Activated naive CD4-positive, alpha-beta T cell treated with anti-CD3 and anti-CD28 coated beads for 36 hours (primary cell): ENCODE measurements at regions of chr11 and their contacts with region 1.

Region 1: GRCh38 chr11:32090545-32091373 is at the start of gene RCN1:
- DNase-seq: peak; percentile 43
- H3K4me3 Mint-ChIP-seq: peak within 1 kb of the TSS; percentile 79
- H3K27ac Mint-ChIP-seq: peak within 1 kb of the TSS; percentile 86
- H3K4me1 Mint-ChIP-seq: peaks cover 39% of the 10 kb centered on the region
- H3K27me3 Mint-ChIP-seq: peaks cover 4% of the 10 kb centered on the region
- total RNA-seq, gene RCN1: 24.8 to 29.6 TPM

Region 2: DNA sequence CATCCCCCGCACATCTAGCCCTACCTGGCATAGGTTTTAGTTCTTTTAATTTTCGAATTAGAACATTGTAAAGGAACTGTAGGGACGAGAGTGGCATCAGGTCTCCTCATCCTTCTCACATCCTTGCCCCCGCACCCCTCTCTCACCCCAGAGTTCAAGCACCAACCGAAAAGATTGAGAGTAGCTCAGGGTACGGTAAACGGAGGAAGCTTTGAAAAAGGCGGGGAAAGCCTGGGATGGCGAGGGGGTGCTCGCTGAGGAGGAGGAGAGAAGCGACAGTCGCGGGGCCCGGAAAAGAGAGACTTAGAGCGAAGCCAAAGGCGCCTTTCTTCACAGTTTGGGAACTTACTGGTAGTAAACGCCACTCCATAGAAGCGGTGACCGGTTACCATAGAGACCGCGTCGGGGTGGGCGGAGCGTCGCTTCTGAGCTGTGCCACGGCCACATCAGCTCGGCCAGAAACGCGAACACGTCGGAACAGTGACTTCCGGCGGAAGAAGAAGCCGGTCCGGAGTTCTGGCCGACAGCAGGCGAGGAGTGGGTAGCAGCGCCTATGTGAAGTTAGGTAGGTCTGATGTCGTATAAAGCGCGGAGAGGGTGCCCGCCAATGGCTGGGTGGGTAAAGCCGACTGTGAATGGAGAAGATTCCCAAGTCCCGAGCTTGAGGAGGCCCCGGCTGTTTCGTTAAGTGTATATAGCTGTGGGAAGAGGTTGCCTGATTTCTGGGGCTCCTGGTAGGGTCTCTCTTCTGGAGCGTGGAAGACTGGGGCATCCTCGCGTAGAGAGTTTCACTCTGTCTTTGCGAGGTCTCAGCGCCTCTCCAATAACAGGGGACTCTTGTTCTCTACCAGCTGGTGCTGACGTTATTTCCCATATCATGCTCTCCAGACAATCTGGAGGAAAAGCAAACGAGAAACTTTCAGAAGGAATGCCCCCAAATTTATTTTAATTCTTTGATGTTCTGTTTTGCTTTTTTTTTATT is 721.1 kb before region 1 on chr11 and contains the starts of genes DCDC1 and DNAJC24:
- CTCF ChIA-PET with region 1: no interaction called
- intact Hi-C with region 1: loop called (anchors 2 kb)
- DNase-seq: peak; percentile 95
- H3K4me3 Mint-ChIP-seq: peak within 1 kb of the TSS; percentile 99
- H3K27ac Mint-ChIP-seq: peak within 1 kb of the TSS; percentile 91
- H3K4me1 Mint-ChIP-seq: peaks cover 55% of the 10 kb centered on the region
- H3K27me3 Mint-ChIP-seq: no peaks in the 10 kb centered on the region
- total RNA-seq, gene DCDC1: 0.25 TPM in 1 of 2 experiments, not detected in the other
- total RNA-seq, gene DNAJC24: 14.2 to 14.6 TPM